Dorsolateral prefrontal cortex (tissue), 120 donors: ENCODE measurements at regions of chr17 and their contacts with region 1.

Region 1: GRCh38 chr17:32783602-32784001 is 93.3 kb downstream of the MYO1D start:
- DNase-seq: no peak
- H3K4me3 ChIP-seq: no peak overlapping the region
- H3K27ac ChIP-seq: peak overlapping the region in 6 of 59 donors; percentile 1 to 50 (median 29)
- H3K27me3 ChIP-seq: no peaks in the 10 kb centered on the region
- CTCF ChIP-seq: peak; percentile 79 to 99 (median 90)

Region 2: GRCh38 chr17:32755045-32755805 is 28.4 kb before region 1 on chr17:
- intact Hi-C with region 1: no loop called
- DNase-seq: peak in 2 of 10 donors; percentile 23 to 35
- H3K4me3 ChIP-seq: peak overlapping the region in 6 of 59 donors; percentile 4 to 31 (median 14)
- H3K27ac ChIP-seq: peak overlapping the region; percentile 44 to 95 (median 85)
- H3K27me3 ChIP-seq: no peaks in the 10 kb centered on the region
- CTCF ChIP-seq: peak; percentile 58 to 94 (median 80)

Region 3: DNA sequence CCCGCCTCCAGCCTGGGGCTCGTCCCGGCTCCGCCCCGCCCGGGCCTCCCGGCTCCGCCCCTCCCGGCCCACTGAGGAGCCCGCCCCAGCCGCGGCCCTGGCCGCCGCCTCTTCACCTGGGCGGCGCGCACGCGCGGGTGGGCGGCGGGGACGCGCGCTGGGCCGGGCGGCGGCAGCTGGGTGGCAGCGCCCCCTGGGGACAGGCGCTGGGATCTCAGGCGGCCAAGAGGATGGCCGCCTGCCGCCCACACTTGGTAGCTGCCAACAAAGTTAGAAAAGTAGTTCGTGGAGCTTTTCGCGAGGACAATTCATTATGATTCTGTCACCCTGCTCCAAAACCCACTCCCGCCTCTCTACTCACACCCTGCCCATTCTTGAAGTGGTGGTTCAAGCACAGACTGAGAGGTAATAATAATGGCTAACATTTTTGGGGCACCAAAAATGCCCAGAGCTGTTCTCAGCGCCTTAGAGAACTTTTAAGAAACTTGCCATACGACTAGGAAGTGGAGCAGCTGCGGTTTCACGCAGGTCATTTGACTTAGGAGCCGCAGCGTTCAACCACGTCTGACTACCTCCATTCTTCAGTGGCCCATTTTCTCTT is 93.7 kb after region 1 on chr17:
- intact Hi-C with region 1: loop called (anchors 1 to 2 kb)
- DNase-seq: peak; percentile 61 to 92 (median 84)
- H3K4me3 ChIP-seq: peak overlapping the region in 58 of 59 donors; percentile 51 to 91 (median 82)
- H3K27ac ChIP-seq: peak overlapping the region in 52 of 59 donors; percentile 29 to 97 (median 87)
- H3K27me3 ChIP-seq: no peaks in the 10 kb centered on the region
- CTCF ChIP-seq: peak; percentile 34 to 95 (median 82)

Region 4: DNA sequence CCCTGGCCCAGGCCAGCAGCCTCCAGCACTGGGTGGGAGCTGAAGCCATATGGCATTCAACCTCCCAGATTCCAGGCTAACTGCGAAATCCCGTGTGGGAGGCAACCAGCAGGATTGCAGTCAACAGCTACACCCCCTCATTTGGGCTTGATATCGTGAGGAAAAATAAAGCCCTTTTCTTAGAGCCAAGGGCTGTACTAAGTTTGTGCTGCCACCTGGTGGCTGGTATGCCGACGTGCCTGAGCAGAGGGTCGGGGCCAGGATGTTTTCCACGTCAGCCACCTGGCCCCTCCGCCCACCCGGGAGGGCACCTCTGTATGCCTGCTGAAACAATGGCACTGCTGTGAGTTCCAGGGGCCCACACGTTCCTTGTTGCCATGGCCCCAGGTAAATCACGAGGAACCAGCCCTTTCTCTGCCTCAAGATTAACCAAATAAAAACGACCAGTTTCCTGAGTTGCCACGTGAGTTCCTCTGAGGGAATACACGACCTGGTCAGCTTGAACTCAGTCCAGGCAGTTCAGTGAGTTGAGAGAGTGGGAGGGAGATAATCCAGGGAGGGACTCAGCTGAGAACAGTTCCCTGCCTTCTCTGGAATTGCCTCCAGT is 153.4 kb after region 1 on chr17:
- intact Hi-C with region 1: loop called (anchors 5 to 10 kb)
- DNase-seq: peak; percentile 43 to 75 (median 58)
- H3K4me3 ChIP-seq: peak overlapping the region in 5 of 59 donors; percentile 5 to 25 (median 21)
- H3K27ac ChIP-seq: peak overlapping the region; percentile 3 to 99 (median 86)
- H3K27me3 ChIP-seq: peaks cover 0 to 11% (median 0%) of the 10 kb centered on the region in 45 donors
- CTCF ChIP-seq: peak; percentile 67 to 91 (median 80)

Region 5: GRCh38 chr17:32997753-32998632 is 214.4 kb after region 1 on chr17:
- intact Hi-C with region 1: loop called in 1 of 2 experiments (anchors 10 kb)
- DNase-seq: peak; percentile 59 to 85 (median 80)
- H3K4me3 ChIP-seq: peak overlapping the region in 6 of 59 donors; percentile 7 to 26 (median 18)
- H3K27ac ChIP-seq: no peak overlapping the region
- H3K27me3 ChIP-seq: peaks cover 0 to 5% (median 0%) of the 10 kb centered on the region in 45 donors
- CTCF ChIP-seq: peak; percentile 66 to 94 (median 86)

Region 6: DNA sequence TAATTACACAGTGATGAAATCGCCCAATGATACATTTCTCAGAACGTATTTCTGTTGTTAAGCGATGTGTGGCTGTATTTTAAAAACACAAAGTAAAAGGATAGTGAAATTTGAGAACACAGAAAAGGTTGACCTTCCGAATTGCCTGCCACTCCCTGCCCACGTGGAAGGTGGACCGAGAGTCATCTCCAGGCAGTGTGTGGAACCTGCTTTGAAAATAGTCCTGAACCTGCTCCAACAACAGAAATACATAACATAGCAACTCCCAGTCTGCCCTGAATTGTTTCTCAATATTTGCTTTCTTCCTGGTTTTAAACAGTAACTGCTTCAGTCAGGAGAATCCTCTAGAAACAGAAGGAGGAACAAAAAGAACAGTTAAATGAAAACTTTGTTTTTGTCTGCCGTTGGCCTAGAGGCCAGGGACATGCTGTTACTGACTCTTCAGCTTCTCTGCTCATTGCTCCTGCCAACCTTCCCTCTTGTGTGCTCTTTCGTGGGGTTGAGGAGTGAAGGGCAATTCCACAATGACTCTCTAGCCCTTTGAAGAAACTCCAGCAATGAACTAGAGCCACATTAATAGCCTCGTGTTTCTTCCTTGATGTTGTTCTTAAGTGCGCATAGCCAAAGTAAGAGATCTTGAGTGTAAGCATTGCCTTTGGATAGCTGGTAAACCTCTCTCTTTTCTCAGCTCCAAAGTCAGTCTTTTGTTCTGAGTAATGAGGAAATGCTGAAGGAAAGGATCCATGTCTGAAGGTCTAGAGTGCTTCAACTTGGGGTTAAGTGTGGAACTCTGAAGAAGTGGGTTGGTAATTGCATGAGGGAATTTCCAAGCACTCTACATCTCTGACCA is 1019.0 kb after region 1 on chr17:
- intact Hi-C with region 1: no loop called
- DNase-seq: no peak
- H3K4me3 ChIP-seq: no peak overlapping the region
- H3K27ac ChIP-seq: peak overlapping the region in 5 of 59 donors; percentile 9 to 52 (median 22)
- H3K27me3 ChIP-seq: peaks cover 0 to 13% (median 0%) of the 10 kb centered on the region in 45 donors
- CTCF ChIP-seq: no peak